Activated B cell treated with CpG ODN at 0.5 μM for 24 hours (primary cell): ENCODE measurements at regions of chr11 and their contacts with region 1.

Region 1: GRCh38 chr11:60634126-60634525 is 65.3 kb upstream of the MS4A8 start:
- DNase-seq: no peak
- ATAC-seq: peak; percentile 59
- H3K4me3 Mint-ChIP-seq: peak overlapping the region; percentile 58
- H3K27ac Mint-ChIP-seq: peak overlapping the region; percentile 78
- H3K4me1 Mint-ChIP-seq: peaks cover 41% of the 10 kb centered on the region
- H3K27me3 Mint-ChIP-seq: peaks cover 5% of the 10 kb centered on the region
- CTCF ChIP-seq: peak; percentile 42

Region 2: GRCh38 chr11:58949184-58949583 is 1684.9 kb before region 1 on chr11:
- CTCF ChIA-PET with region 1: no interaction called
- POLR2A ChIA-PET with region 1: no interaction called
- intact Hi-C with region 1: no loop called
- DNase-seq: no peak
- ATAC-seq: no peak
- H3K4me3 Mint-ChIP-seq: no peak overlapping the region
- H3K27ac Mint-ChIP-seq: no peak overlapping the region
- H3K4me1 Mint-ChIP-seq: no peaks in the 10 kb centered on the region
- H3K27me3 Mint-ChIP-seq: peaks cover 2% of the 10 kb centered on the region
- CTCF ChIP-seq: no peak

Region 3: DNA sequence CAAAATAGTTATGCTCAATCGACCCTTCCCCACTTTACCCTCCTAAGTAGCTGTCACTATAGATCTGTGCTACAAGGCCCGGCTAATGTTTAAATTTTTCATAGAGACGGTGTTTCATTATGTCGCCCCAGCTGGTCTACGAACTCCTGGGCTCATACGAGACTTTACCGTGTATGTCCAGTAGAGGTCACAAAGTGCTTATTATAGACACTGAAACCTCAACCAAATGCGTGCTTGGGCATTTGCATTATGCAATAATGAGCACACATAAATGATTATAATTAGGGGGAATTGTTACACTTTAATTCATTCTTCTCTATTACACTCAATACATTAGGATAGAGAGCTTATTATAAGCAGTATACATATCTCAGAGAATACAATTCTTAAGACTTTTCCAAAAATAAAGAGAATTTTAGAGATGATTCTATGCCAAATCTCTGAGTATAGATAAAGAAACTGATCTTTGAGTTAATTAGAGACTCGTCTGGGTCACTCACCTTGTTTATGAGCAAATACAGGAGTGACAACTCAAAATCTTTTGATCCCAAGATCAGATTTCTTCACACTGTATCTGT is 811.0 kb before region 1 on chr11:
- CTCF ChIA-PET with region 1: no interaction called
- POLR2A ChIA-PET with region 1: no interaction called
- intact Hi-C with region 1: loop called (anchors 5 kb)
- DNase-seq: no peak
- ATAC-seq: peak; percentile 75
- H3K4me3 Mint-ChIP-seq: no peak overlapping the region
- H3K27ac Mint-ChIP-seq: no peak overlapping the region
- H3K4me1 Mint-ChIP-seq: peaks cover 12% of the 10 kb centered on the region
- H3K27me3 Mint-ChIP-seq: no peaks in the 10 kb centered on the region
- CTCF ChIP-seq: peak; percentile 23

Region 4: DNA sequence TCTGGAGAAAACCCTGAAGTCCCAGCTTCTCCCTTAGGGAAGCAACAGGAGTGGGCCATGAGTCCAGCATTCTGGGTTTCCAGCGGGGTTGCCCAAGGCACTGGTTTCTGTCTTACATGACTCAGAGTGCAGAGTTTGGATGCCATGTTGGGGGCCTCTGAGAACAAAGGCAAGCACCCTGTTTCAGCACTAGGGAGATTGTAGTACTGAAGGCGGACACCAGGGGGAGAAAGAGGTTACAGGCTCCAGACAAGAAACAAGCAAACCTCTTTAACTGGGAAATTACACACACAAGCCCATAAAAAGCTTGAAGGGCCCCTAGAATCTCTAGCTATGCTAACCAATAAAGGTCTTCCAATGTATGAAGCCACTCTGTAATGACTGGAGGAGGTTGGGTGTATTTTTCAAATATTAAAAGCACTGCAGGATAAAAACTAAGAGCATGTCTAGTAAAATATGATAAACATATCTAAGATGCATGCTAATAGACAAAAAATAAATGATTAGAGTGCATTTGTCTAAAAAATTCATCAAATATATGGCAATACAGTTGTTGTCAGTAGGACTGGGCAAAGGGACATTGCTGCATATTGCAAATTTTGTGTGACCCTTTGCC is 300.0 kb before region 1 on chr11:
- CTCF ChIA-PET with region 1: interaction called, 8 read pairs
- POLR2A ChIA-PET with region 1: interaction called, 3 read pairs
- intact Hi-C with region 1: loop called (anchors 5 kb)
- DNase-seq: peak; percentile 49
- ATAC-seq: peak; percentile 92
- H3K4me3 Mint-ChIP-seq: no peak overlapping the region
- H3K27ac Mint-ChIP-seq: no peak overlapping the region
- H3K4me1 Mint-ChIP-seq: peaks cover 20% of the 10 kb centered on the region
- H3K27me3 Mint-ChIP-seq: no peaks in the 10 kb centered on the region
- CTCF ChIP-seq: no peak

Region 5: GRCh38 chr11:60570970-60571369 is 63.2 kb before region 1 on chr11:
- CTCF ChIA-PET with region 1: no interaction called
- POLR2A ChIA-PET with region 1: no interaction called
- intact Hi-C with region 1: loop called (anchors 2 kb)
- DNase-seq: no peak
- ATAC-seq: peak; percentile 96
- H3K4me3 Mint-ChIP-seq: peak overlapping the region; percentile 7
- H3K27ac Mint-ChIP-seq: peak overlapping the region; percentile 56
- H3K4me1 Mint-ChIP-seq: peaks cover 30% of the 10 kb centered on the region
- H3K27me3 Mint-ChIP-seq: peaks cover 3% of the 10 kb centered on the region
- CTCF ChIP-seq: no peak

Region 6: DNA sequence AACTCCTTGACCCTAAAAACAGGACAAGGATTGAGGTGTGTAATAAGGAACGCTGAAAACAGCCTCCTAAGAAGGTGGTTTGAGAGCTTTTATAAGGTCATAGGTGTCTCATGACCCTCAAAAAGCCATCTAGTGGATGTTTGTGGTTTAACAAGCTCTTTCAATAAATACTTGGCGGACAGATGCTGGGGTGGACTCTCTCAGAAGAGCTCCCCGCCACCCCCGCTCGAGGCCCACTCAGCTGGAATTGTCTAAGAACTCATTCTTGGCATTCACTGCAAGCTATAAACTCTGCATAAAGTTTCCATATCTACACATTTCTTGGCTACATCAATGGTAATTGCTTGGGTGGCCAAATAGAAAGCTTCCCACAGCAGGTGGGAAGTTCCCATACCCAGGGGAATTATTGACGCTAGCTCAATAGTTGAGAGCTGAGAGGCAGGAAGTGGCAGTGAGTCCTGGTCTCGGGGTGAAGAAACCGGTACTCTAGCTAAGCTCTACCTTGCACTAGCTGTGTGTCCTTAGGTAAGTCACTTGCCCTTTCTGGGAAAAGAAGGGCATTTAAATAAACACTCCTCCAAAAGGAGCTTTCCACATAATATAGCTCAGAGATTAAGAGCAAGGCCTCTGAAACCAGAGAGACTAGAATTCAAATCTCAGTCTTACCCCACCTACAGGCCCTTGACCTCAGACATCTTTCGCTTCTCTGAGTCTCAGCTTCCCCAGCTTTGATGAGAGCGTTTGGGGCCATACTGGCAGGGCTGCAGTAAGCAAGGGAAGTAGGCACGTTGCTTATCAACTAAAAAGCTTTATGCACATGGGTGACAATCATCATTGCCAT is 128.9 kb after region 1 on chr11:
- CTCF ChIA-PET with region 1: interaction called, 3 read pairs
- POLR2A ChIA-PET with region 1: interaction called, 5 read pairs
- intact Hi-C with region 1: loop called (anchors 2 kb)
- DNase-seq: no peak
- ATAC-seq: peak; percentile 90
- H3K4me3 Mint-ChIP-seq: peak overlapping the region; percentile 44
- H3K27ac Mint-ChIP-seq: peak overlapping the region; percentile 56
- H3K4me1 Mint-ChIP-seq: peaks cover 55% of the 10 kb centered on the region
- H3K27me3 Mint-ChIP-seq: peaks cover 18% of the 10 kb centered on the region
- CTCF ChIP-seq: no peak